HepG2 (cell line): ENCODE measurements at regions of chr1 and their contacts with region 1.

Region 1: GRCh38 chr1:61337981-61338848 is 255.9 kb downstream of the NFIA start:
- DNase-seq: peak; percentile 91
- ATAC-seq: peak; percentile 95
- H3K4me3 ChIP-seq: peak overlapping the region; percentile 7 to 39 (median 37); a peak in 2 of 6 replicates
- H3K27ac ChIP-seq: peak overlapping the region; percentile 78
- H3K4me1 ChIP-seq: peaks cover 47% of the 10 kb centered on the region
- H3K27me3 ChIP-seq: no peaks in the 10 kb centered on the region
- CTCF ChIP-seq: peak; percentile 69
- EP300 ChIP-seq: peak; percentile 36 to 65; a peak in 2 of 4 replicates
- POLR2A ChIP-seq: no peak
- RAD21 ChIP-seq: peak; percentile 67; the same call in 1 of the 2 replicates

Region 2: GRCh38 chr1:61120998-61121397 is 217.2 kb before region 1 on chr1:
- CTCF ChIA-PET with region 1: no interaction called
- POLR2A ChIA-PET with region 1: no interaction called
- in situ Hi-C with region 1: no loop called
- intact Hi-C with region 1: loop called (anchors 5 kb)
- DNase-seq: peak; percentile 74
- ATAC-seq: peak; percentile 46
- H3K4me3 ChIP-seq: peak overlapping the region in 2 of 3 experiments; percentile 18 to 35; a peak in 3 of 6 replicates
- H3K27ac ChIP-seq: peak overlapping the region; percentile 71
- H3K4me1 ChIP-seq: peaks cover 89% of the 10 kb centered on the region
- H3K27me3 ChIP-seq: no peaks in the 10 kb centered on the region
- CTCF ChIP-seq: no peak
- EP300 ChIP-seq: peak; percentile 77 to 82; a peak in 3 of 4 replicates
- POLR2A ChIP-seq: no peak
- RAD21 ChIP-seq: no peak

Region 3: GRCh38 chr1:61184040-61184713 is 154.0 kb before region 1 on chr1:
- CTCF ChIA-PET with region 1: no interaction called
- POLR2A ChIA-PET with region 1: interaction called, 3 read pairs
- in situ Hi-C with region 1: no loop called
- intact Hi-C with region 1: loop called (anchors 1 kb)
- DNase-seq: peak; percentile 74
- ATAC-seq: peak; percentile 75
- H3K4me3 ChIP-seq: peak overlapping the region; percentile 31 to 65 (median 51)
- H3K27ac ChIP-seq: peak overlapping the region; percentile 98
- H3K4me1 ChIP-seq: peaks cover 61% of the 10 kb centered on the region
- H3K27me3 ChIP-seq: no peaks in the 10 kb centered on the region
- CTCF ChIP-seq: no peak
- EP300 ChIP-seq: no peak
- POLR2A ChIP-seq: peak in 1 of 2 experiments; percentile 17; a peak in 1 of 4 replicates
- RAD21 ChIP-seq: no peak

Region 4: GRCh38 chr1:61221642-61222041 is 116.6 kb before region 1 on chr1:
- CTCF ChIA-PET with region 1: no interaction called
- POLR2A ChIA-PET with region 1: no interaction called
- in situ Hi-C with region 1: no loop called
- intact Hi-C with region 1: loop called (anchors 2 kb)
- DNase-seq: peak; percentile 78
- ATAC-seq: peak; percentile 69
- H3K4me3 ChIP-seq: peak overlapping the region in 2 of 3 experiments; percentile 18 to 26; a peak in 3 of 6 replicates
- H3K27ac ChIP-seq: peak overlapping the region; percentile 55
- H3K4me1 ChIP-seq: peaks cover 50% of the 10 kb centered on the region
- H3K27me3 ChIP-seq: no peaks in the 10 kb centered on the region
- CTCF ChIP-seq: no peak
- EP300 ChIP-seq: peak in 1 of 2 experiments; percentile 38; a peak in 1 of 4 replicates
- POLR2A ChIP-seq: no peak
- RAD21 ChIP-seq: no peak

Region 5: DNA sequence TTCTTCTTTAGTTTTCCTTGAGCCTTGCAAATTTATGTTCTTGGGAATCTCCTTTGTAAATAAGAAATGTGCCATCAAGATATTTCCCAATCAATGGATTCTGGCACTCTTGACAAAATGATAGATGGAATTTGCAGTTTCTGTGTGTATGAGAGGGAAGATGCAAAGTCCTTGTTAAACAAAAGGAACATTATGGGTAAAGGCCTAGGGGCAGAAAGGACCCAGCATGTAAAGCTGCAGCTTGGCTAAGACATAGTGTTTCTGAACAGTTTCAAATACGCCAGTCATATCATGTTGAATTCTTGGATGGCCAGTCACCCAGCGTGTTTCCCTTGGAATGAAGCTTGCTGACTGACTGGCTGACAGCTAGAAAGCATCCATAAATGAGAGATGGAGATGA is 45.0 kb before region 1 on chr1:
- CTCF ChIA-PET with region 1: no interaction called
- POLR2A ChIA-PET with region 1: no interaction called
- in situ Hi-C with region 1: no loop called
- intact Hi-C with region 1: loop called (anchors 2 kb)
- DNase-seq: peak; percentile 68
- ATAC-seq: peak; percentile 82
- H3K4me3 ChIP-seq: no peak overlapping the region
- H3K27ac ChIP-seq: peak overlapping the region; percentile 32
- H3K4me1 ChIP-seq: peaks cover 80% of the 10 kb centered on the region
- H3K27me3 ChIP-seq: no peaks in the 10 kb centered on the region
- CTCF ChIP-seq: no peak
- EP300 ChIP-seq: no peak
- POLR2A ChIP-seq: no peak
- RAD21 ChIP-seq: no peak